Breast epithelium (tissue), 4 donors: ENCODE measurements at regions of chr7 and their contacts with region 1.

Region 1: DNA sequence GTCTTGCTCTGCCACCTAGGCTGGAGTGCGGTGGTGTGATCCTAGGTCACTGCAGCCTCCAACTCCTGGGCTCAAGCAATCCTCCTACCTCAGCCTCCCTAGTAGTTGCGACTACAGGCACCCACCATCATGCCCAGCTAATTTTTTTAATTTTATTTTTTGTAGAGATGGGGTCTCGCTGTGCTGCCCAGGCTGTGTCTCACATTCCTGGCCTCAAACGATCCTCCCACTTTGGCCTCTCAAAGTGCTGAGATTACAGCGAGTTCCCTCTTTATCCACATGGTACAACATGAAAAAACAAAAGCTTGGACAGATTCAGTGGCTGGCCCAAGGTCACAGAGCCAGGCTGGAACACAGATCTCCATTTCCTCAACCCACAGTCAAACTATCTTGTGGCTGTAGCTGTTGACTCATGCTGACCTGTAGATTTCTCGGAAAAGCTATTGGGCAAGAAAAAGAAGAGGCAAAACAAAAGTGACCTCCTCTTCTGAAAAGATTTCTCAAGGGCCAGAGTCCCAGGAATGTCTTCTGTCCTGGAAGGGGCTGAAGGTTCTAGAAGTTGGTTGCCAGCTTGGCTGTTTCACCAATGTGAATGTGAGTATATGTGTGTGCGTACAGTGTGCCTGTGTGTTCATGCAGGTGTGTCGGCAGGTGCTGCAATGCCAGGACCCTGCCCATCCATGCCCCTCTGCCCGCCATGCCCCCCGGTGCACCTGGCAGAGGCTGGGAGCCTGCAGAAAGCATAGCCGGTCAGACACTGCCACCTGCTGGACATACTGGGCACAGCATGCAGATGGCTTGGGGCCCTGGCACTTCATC is 28.4 kb downstream of the TMEM130 start:
- DNase-seq: peak; percentile 24 to 72
- H3K4me3 ChIP-seq: no peak overlapping the region
- H3K27ac ChIP-seq: no peak overlapping the region
- H3K4me1 ChIP-seq: no peaks in the 10 kb centered on the region
- H3K27me3 ChIP-seq: peaks cover 0 to 7% of the 10 kb centered on the region in 2 donors
- CTCF ChIP-seq: peak; percentile 86 to 97 (median 96)
- POLR2A ChIP-seq: no peak

Region 2: GRCh38 chr7:98315341-98315983 is 525.9 kb before region 1 on chr7:
- intact Hi-C with region 1: no loop called
- DNase-seq: no peak
- H3K4me3 ChIP-seq: no peak overlapping the region
- H3K27ac ChIP-seq: no peak overlapping the region
- H3K4me1 ChIP-seq: no peaks in the 10 kb centered on the region
- H3K27me3 ChIP-seq: no peaks in the 10 kb centered on the region
- CTCF ChIP-seq: no peak
- POLR2A ChIP-seq: no peak

Region 3: DNA sequence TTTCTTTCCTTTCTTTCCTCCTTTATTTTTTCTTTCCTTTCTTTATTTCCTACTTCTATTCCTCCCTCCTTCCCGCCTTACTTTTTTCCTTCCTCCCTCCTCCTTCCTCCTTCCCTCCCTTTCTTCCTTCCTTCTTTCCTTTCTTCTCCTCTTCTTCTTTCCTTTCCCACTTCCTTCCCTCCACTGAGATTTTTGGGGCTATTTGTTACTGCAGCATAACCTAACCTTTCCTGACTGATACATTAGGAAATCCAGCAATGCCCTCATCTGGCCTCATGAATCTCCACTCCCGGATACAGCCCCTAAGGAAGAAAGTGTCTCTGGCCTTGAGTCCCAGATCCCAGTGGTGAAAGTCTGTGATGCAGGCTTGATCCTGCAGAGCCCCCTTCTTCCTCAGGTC is 401.9 kb before region 1 on chr7:
- intact Hi-C with region 1: loop called (anchors 5 kb)
- DNase-seq: no peak
- H3K4me3 ChIP-seq: no peak overlapping the region
- H3K27ac ChIP-seq: no peak overlapping the region
- H3K4me1 ChIP-seq: no peaks in the 10 kb centered on the region
- H3K27me3 ChIP-seq: no peaks in the 10 kb centered on the region
- CTCF ChIP-seq: no peak
- POLR2A ChIP-seq: no peak

Region 4: GRCh38 chr7:98771519-98771918 is 69.9 kb before region 1 on chr7:
- intact Hi-C with region 1: no loop called
- DNase-seq: no peak
- H3K4me3 ChIP-seq: no peak overlapping the region
- H3K27ac ChIP-seq: no peak overlapping the region
- H3K4me1 ChIP-seq: no peaks in the 10 kb centered on the region
- H3K27me3 ChIP-seq: no peaks in the 10 kb centered on the region
- CTCF ChIP-seq: no peak
- POLR2A ChIP-seq: no peak

Region 5: GRCh38 chr7:98902523-98902922 is 61.1 kb after region 1 on chr7:
- intact Hi-C with region 1: no loop called
- DNase-seq: no peak
- H3K4me3 ChIP-seq: no peak overlapping the region
- H3K27ac ChIP-seq: no peak overlapping the region
- H3K4me1 ChIP-seq: no peaks in the 10 kb centered on the region
- H3K27me3 ChIP-seq: no peaks in the 10 kb centered on the region
- CTCF ChIP-seq: no peak
- POLR2A ChIP-seq: no peak